Activated B cell treated with CpG ODN at 0.5 μM for 24 hours (primary cell): ENCODE measurements at regions of chr9 and their contacts with region 1.

Region 1: DNA sequence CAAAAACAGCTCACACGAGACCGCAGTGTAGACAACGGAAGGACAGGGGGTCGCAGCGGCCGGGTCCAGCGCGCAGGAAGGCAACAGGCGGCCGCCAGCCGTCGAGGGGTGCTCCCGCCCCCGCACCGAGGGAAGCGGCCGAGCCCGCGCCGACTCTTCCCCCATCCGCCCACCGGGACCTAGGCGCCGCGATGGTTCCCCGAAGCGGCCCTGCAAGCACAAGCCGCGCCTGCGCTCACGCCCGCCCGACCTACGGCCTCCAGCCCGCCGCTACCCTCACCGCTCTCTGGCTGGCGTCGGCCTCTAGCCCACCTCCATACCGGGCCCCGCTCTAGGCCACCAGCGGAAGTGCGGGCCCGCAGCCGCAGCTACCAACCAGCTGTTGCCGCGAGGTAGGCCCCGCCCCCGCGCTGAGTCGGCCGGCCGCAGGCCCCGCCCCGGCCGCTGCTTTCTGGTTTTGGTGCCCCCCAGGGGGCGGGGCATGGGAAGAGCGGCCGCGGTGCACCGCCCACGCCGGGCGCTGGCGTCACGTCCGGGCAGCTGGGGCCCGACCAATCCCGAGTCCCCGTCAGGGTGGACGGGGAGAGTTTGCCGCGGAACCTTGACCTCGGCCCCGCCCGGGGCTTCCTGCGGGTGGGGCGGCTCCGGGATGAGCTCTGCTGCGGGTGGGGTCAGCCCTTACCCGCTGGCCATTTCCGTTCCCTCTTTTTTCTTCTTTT is at the start of gene SETX:
- DNase-seq: peak; percentile 93
- ATAC-seq: peak; percentile 87
- H3K4me3 Mint-ChIP-seq: peak within 1 kb of the TSS; percentile 94
- H3K27ac Mint-ChIP-seq: peak within 1 kb of the TSS; percentile 97
- H3K4me1 Mint-ChIP-seq: peaks cover 53% of the 10 kb centered on the region
- H3K27me3 Mint-ChIP-seq: no peaks in the 10 kb centered on the region
- CTCF ChIP-seq: no peak
- total RNA-seq, gene SETX: 91.3 and 109 TPM in 2 replicates

Region 2: DNA sequence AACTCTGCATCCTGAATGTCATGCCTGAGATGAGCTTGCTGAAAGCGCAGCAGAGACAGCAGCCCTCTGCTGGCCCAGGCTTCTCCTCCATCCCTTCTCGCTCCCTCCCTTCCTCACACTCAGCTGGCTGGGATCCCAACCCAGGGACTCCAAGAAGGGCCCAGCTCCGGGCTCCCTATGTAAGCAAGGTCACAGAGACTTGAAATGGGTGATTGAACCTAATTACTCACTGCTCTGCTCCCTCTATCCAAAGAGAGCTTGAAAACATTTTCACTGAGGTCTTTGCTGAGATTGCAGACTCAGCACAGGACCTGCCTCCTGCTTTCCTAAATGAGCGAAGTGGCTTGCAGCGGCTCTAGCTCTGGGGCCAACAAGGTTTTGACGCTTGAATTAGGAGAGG is 657.7 kb before region 1 on chr9:
- CTCF ChIA-PET with region 1: no interaction called
- POLR2A ChIA-PET with region 1: no interaction called
- intact Hi-C with region 1: no loop called
- DNase-seq: no peak
- ATAC-seq: no peak
- H3K4me3 Mint-ChIP-seq: no peak overlapping the region
- H3K27ac Mint-ChIP-seq: no peak overlapping the region
- H3K4me1 Mint-ChIP-seq: peaks cover 97% of the 10 kb centered on the region
- H3K27me3 Mint-ChIP-seq: no peaks in the 10 kb centered on the region
- CTCF ChIP-seq: no peak

Region 3: GRCh38 chr9:131776473-131776872 is 578.3 kb before region 1 on chr9:
- CTCF ChIA-PET with region 1: no interaction called
- POLR2A ChIA-PET with region 1: interaction called, 10 read pairs
- intact Hi-C with region 1: no loop called
- DNase-seq: no peak
- ATAC-seq: no peak
- H3K4me3 Mint-ChIP-seq: no peak overlapping the region
- H3K27ac Mint-ChIP-seq: no peak overlapping the region
- H3K4me1 Mint-ChIP-seq: no peaks in the 10 kb centered on the region
- H3K27me3 Mint-ChIP-seq: peaks cover 26% of the 10 kb centered on the region
- CTCF ChIP-seq: no peak

Region 4: GRCh38 chr9:132372177-132373095 is 17.6 kb after region 1 on chr9:
- CTCF ChIA-PET with region 1: no interaction called
- POLR2A ChIA-PET with region 1: interaction called, 85 read pairs
- intact Hi-C with region 1: loop called (anchors 1 kb)
- DNase-seq: no peak
- ATAC-seq: no peak
- H3K4me3 Mint-ChIP-seq: peak overlapping the region; percentile 61
- H3K27ac Mint-ChIP-seq: peak overlapping the region; percentile 94
- H3K4me1 Mint-ChIP-seq: peaks cover 42% of the 10 kb centered on the region
- H3K27me3 Mint-ChIP-seq: no peaks in the 10 kb centered on the region
- CTCF ChIP-seq: no peak

Region 5: DNA sequence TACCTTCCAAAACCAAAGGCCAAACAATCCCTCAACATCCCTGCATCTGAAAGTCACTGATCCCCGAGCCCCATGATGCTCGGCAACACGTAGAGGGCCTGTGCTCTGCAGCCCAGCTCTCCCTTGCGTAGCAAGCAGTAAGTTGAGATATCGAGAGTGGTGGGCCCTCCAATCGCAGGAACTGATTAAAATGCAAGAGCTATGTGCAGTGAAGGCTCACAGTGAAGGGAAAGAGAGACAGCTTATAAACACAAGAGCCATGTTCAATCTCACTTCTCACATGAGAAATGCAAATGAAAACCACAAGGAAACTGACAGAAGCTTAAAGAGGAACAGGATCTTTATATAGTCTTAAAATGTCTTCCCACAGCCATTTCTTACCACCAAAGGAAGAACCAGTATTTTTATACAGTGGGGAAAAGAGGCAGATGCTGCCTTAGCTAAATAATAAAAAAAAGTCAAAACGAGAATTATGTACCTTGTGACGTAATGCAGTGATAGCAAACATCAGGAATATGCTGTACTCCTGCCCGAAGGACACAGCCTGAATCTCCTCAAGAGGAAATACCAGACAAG is 27.3 kb after region 1 on chr9:
- CTCF ChIA-PET with region 1: interaction called, 57 read pairs
- POLR2A ChIA-PET with region 1: interaction called, 527 read pairs
- intact Hi-C with region 1: loop called (anchors 1 kb)
- DNase-seq: peak; percentile 33
- ATAC-seq: peak; percentile 80
- H3K4me3 Mint-ChIP-seq: peak overlapping the region; percentile 80
- H3K27ac Mint-ChIP-seq: peak overlapping the region; percentile 99
- H3K4me1 Mint-ChIP-seq: peaks cover 76% of the 10 kb centered on the region
- H3K27me3 Mint-ChIP-seq: no peaks in the 10 kb centered on the region
- CTCF ChIP-seq: no peak